Sciatic nerve (tissue), 2 donors: ENCODE measurements at regions of chr10 and their contacts with region 1.

Region 1: GRCh38 chr10:116796910-116797513 is 52.3 kb upstream of the ENO4 start:
- DNase-seq: peak; percentile 91
- ATAC-seq: peak; percentile 82

Region 2: GRCh38 chr10:116444527-116445142 is 352.4 kb before region 1 on chr10:
- intact Hi-C with region 1: no loop called
- DNase-seq: no peak
- ATAC-seq: no peak

Region 3: GRCh38 chr10:116742367-116743265 is 54.4 kb before region 1 on chr10 and contains the start of gene HSPA12A:
- intact Hi-C with region 1: no loop called
- DNase-seq: peak; percentile 87
- ATAC-seq: peak; percentile 84
- total RNA-seq, gene HSPA12A: 139 TPM

Region 4: GRCh38 chr10:116826803-116827202 is 29.8 kb after region 1 on chr10:
- intact Hi-C with region 1: no loop called
- DNase-seq: no peak
- ATAC-seq: no peak

Region 5: GRCh38 chr10:117174439-117175214 is 377.6 kb after region 1 on chr10:
- intact Hi-C with region 1: loop called (anchors 5 kb)
- DNase-seq: peak; percentile 88
- ATAC-seq: peak; percentile 89